HCT116 (cell line): ENCODE measurements at regions of chr4 and their contacts with region 1.

Region 1: GRCh38 chr4:10582059-10582686 is 102.4 kb downstream of the CLNK start:
- DNase-seq: peak; percentile 54
- ATAC-seq: peak; percentile 94
- H3K4me3 ChIP-seq: no peak overlapping the region
- H3K27ac ChIP-seq: no peak overlapping the region
- H3K4me1 ChIP-seq: peaks cover 0 to 9% of the 10 kb centered on the region in 2 experiments; a peak in 1 of 4 replicates
- H3K27me3 ChIP-seq: no peaks in the 10 kb centered on the region
- CTCF ChIP-seq: peak; percentile 72 to 94 (median 76)
- POLR2A ChIP-seq: no peak
- RAD21 ChIP-seq: peak; percentile 93

Region 2: GRCh38 chr4:11397819-11398610 is 815.8 kb after region 1 on chr4:
- CTCF ChIA-PET with region 1: no interaction called
- POLR2A ChIA-PET with region 1: no interaction called
- RAD21 ChIA-PET with region 1: no interaction called
- intact Hi-C with region 1: loop called (anchors 10 kb)
- DNase-seq: no peak
- ATAC-seq: no peak
- H3K4me3 ChIP-seq: peak overlapping the region in 1 of 2 experiments; percentile 2; a peak in 1 of 4 replicates
- H3K27ac ChIP-seq: peak overlapping the region; percentile 23; the same call in 1 of the 2 replicates
- H3K4me1 ChIP-seq: peaks cover 9 to 47% of the 10 kb centered on the region in 2 experiments
- H3K27me3 ChIP-seq: no peaks in the 10 kb centered on the region
- CTCF ChIP-seq: no peak
- POLR2A ChIP-seq: no peak
- RAD21 ChIP-seq: no peak

Region 3: GRCh38 chr4:11954093-11954492 is 1371.9 kb after region 1 on chr4:
- CTCF ChIA-PET with region 1: no interaction called
- POLR2A ChIA-PET with region 1: no interaction called
- RAD21 ChIA-PET with region 1: no interaction called
- intact Hi-C with region 1: loop called (anchors 1 kb)
- DNase-seq: peak; percentile 44
- ATAC-seq: peak; percentile 72
- H3K4me3 ChIP-seq: no peak overlapping the region
- H3K27ac ChIP-seq: no peak overlapping the region
- H3K4me1 ChIP-seq: peaks cover 0 to 10% of the 10 kb centered on the region in 2 experiments; a peak in 2 of 4 replicates
- H3K27me3 ChIP-seq: no peaks in the 10 kb centered on the region
- CTCF ChIP-seq: peak; percentile 56 to 71 (median 71); a peak in 5 of 6 replicates
- POLR2A ChIP-seq: no peak
- RAD21 ChIP-seq: peak; percentile 74